H1 (cell line): ENCODE measurements at regions of chr11 and their contacts with region 1.

Region 1: DNA sequence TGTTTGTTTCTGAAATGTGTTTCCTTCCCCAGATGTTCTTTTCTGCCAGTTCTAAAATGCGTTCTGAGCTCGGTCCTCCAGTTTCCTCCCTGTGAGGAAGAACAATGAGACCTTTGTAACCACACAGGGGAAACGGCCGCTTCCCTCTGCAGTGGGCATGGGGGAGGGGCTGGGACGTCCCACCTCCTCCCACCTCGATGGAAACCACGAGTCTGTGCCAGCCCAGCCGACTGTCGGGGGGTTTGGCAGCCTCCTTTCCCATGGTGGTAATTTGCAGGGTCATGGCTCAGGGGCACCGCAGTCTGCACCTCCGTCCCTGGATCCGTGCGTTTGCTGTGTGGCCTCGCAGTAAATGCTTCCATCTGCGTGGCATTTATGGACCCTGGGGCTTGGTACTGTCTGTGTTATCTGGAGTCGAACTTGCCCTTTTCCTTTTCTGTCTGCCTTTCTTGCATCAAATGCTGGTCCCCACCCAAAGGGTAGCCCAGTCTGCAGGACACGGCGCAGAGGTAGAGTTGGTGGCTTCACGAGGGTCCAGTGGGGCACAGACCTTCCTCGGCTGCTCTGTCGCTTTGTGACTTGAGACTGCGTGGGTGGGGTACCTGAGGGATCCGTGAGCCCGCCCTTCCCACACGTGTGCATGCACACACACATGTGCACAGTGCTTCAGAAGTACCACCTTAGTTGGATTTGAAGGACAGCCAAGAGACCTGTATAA is 16.1 kb downstream of the LRP5 start:
- DNase-seq: no peak
- H3K4me3 ChIP-seq: peak overlapping the region in 1 of 4 experiments; percentile 38; a peak in 4 of 8 replicates
- H3K27ac ChIP-seq: peak overlapping the region; percentile 54
- H3K4me1 ChIP-seq: peaks cover 31 to 65% (median 47%) of the 10 kb centered on the region in 4 experiments
- H3K27me3 ChIP-seq: no peaks in the 10 kb centered on the region
- CTCF ChIP-seq: no peak
- EP300 ChIP-seq: no peak
- POLR2A ChIP-seq: no peak; a peak in 1 of 3 replicates
- RAD21 ChIP-seq: no peak

Region 2: DNA sequence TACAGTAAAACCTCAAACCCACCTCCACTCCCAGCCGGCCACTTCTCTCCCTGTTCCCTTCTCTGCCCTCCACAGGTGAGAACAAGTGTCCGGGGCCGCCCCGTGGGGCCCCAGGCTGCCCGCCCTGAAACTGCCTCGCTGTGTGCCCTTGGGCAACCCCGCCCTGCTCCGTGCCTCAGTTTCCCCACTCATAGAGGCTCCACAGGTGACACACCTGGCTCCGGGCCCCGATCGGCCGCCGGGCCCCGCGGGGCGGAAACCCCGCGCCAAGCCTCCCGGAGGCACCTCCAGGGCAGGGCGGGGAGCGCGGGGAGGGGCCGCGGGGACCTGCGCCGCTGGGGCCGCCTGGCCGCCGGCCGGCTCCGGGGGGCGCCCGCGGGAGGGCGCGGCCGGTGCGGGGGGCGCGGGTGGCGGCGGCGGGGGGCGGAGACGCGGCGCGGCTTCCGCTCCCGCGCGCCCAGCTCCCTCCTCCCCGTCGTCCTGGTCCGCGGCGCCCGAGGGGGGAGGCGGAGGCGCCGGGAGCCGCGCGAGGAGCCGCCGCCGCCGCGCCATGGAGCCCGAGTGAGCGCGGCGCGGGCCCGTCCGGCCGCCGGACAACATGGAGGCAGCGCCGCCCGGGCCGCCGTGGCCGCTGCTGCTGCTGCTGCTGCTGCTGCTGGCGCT is 16.3 kb before region 1 on chr11 and contains the start of gene LRP5:
- CTCF ChIA-PET with region 1: interaction called, 13 read pairs
- POLR2A ChIA-PET with region 1: interaction called, 19 read pairs
- DNase-seq: no peak
- H3K4me3 ChIP-seq: peak within 1 kb of the TSS; percentile 58 to 84 (median 70)
- H3K27ac ChIP-seq: no peak within 1 kb of the TSS
- H3K4me1 ChIP-seq: peaks cover 8 to 36% (median 25%) of the 10 kb centered on the region in 4 experiments
- H3K27me3 ChIP-seq: peaks cover 0 to 8% (median 3%) of the 10 kb centered on the region in 4 experiments; a peak in 3 of 7 replicates
- CTCF ChIP-seq: no peak
- EP300 ChIP-seq: no peak
- POLR2A ChIP-seq: no peak
- RAD21 ChIP-seq: no peak
- total RNA-seq, gene LRP5: 35.4 and 38.9 TPM in 2 replicates

Region 3: DNA sequence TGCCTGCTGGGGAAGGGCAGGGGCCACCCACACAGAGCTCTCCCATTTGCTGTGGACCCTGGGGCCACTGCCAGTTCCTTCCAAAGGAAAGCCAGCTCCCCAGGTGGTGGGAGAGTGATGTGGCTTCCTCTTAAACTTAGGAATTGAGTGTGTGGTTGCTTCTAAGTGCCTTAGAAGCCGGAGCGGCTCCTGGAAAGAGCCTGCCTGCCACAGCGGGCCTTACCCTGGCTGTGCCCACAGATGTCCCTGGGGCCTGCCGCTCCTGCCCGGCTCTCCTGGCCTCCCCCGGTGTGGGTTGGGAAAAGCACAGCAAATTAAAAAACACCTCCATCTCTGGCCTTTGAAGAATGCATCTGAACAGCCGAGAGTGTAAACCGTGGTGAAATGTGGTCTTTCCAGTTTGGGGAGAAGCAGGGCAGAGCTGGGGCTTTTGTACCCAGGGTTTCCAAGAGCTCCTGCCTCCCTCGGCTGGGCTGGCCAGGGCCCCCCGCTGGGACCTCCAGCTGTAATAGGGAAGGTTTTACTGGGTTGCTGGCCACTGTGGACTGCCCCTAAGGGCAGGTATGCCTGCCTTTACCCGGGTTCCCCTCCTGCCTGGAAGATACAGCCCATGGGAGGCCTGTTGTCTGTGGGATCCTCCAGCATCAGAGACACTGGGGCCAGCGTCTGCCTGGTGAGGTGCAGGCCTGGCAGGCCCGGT is 14.1 kb after region 1 on chr11:
- CTCF ChIA-PET with region 1: interaction called, 26 read pairs
- POLR2A ChIA-PET with region 1: interaction called, 17 read pairs
- DNase-seq: peak; percentile 29 to 79
- H3K4me3 ChIP-seq: peak overlapping the region in 2 of 4 experiments; percentile 14 to 16; a peak in 1 of 8 replicates
- H3K27ac ChIP-seq: peak overlapping the region; percentile 77
- H3K4me1 ChIP-seq: peaks cover 11 to 33% (median 26%) of the 10 kb centered on the region in 4 experiments
- H3K27me3 ChIP-seq: no peaks in the 10 kb centered on the region
- CTCF ChIP-seq: no peak
- EP300 ChIP-seq: no peak
- POLR2A ChIP-seq: no peak
- RAD21 ChIP-seq: no peak

Region 4: GRCh38 chr11:68354148-68354872 is 25.8 kb after region 1 on chr11:
- CTCF ChIA-PET with region 1: interaction called, 10 read pairs
- POLR2A ChIA-PET with region 1: interaction called, 3 read pairs
- DNase-seq: no peak
- H3K4me3 ChIP-seq: no peak overlapping the region
- H3K27ac ChIP-seq: peak overlapping the region; percentile 27; the same call in 1 of the 2 replicates
- H3K4me1 ChIP-seq: peaks cover 0 to 13% (median 7%) of the 10 kb centered on the region in 4 experiments; a peak in 6 of 7 replicates
- H3K27me3 ChIP-seq: no peaks in the 10 kb centered on the region
- CTCF ChIP-seq: no peak
- EP300 ChIP-seq: no peak
- POLR2A ChIP-seq: no peak
- RAD21 ChIP-seq: no peak

Region 5: DNA sequence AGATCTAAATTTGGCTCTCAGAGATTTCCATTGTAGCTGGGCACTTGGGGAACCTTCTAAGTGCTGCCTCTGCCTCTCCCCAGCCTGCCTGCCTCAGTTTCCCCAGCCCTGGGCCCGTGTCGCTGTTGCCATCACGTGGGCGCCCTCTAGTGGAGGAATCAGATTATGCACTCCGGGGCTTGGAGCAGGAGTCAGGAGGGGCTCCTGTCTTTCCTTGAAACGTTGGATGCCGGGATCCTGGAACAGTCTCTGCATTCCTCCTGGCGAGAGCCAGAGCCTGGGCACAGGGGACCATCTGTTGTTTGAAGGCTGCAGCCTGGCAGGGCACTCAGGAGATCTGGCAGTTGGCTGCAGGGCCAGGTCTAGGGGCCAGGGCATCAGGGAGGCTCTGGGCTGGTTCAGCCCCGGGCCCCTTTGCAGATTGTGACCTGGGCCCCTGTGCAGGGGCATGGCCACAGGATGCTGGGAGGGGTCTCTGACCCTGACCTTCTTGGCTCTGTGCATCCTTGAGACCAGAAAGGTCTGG is 55.5 kb after region 1 on chr11:
- CTCF ChIA-PET with region 1: interaction called, 32 read pairs
- POLR2A ChIA-PET with region 1: interaction called, 3 read pairs
- DNase-seq: peak; percentile 33 to 98
- H3K4me3 ChIP-seq: no peak overlapping the region
- H3K27ac ChIP-seq: no peak overlapping the region
- H3K4me1 ChIP-seq: no peaks in the 10 kb centered on the region
- H3K27me3 ChIP-seq: no peaks in the 10 kb centered on the region
- CTCF ChIP-seq: peak; percentile 93 to 96 (median 93)
- EP300 ChIP-seq: no peak
- POLR2A ChIP-seq: no peak
- RAD21 ChIP-seq: peak; percentile 94 to 97